HEK293T (cell line): ENCODE measurements at regions of chr13 and their contacts with region 1.

Region 1: DNA sequence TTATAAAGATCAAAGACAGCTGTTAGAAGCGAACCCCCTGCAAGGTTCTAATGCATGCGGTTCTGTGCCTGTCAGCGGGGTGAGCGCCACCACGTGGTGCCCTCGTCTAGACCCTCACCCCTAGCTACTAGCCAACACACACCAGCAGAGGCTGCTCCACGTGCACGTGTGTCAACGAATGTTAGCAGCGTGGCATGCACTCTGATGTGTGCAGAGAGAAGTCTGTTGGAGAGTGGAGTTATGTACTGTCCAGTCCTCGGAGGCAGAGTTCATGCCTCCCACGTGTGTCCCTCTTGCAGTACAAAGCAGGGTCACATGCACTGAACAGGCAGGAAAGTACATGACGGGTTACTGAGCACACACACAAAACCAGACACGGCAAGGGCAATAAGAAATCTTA is 75.0 kb upstream of the SLC15A1 start:
- DNase-seq: no peak

Region 2: DNA sequence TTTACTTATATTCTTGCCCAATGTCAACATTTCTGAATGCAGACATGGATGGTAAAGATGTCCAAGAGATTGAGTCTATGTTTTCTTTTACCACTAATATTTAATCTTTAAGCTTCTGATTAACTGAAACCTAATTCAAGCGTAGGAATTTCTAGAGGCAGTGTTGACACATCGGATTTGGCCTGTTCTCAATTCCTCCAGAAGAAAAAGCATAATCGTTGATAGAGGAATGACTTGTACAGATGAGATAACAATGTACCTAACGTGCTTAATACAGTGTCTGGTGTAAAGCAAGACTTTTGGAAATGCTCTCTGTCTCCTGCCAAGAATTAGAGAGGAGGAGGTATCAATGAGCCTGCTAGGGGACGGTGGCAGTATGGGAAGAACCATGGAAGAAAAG is 110.2 kb before region 1 on chr13:
- CTCF ChIA-PET with region 1: no interaction called
- POLR2A ChIA-PET with region 1: no interaction called
- DNase-seq: no peak

Region 3: GRCh38 chr13:98839856-98840769 is 12.7 kb after region 1 on chr13:
- CTCF ChIA-PET with region 1: interaction called, 25 read pairs
- POLR2A ChIA-PET with region 1: no interaction called
- DNase-seq: peak; percentile 75

Region 4: GRCh38 chr13:98927951-98928927 is 100.8 kb after region 1 on chr13:
- CTCF ChIA-PET with region 1: no interaction called
- POLR2A ChIA-PET with region 1: no interaction called
- DNase-seq: no peak